Activated naive CD4-positive, alpha-beta T cell treated with anti-CD3 and anti-CD28 coated beads for 36 hours (primary cell): ENCODE measurements at regions of chr12 and their contacts with region 1.

Region 1: GRCh38 chr12:68180792-68181744 is 21.5 kb upstream of the IFNG start:
- DNase-seq: peak; percentile 70
- H3K4me3 Mint-ChIP-seq: no peak overlapping the region
- H3K27ac Mint-ChIP-seq: peak overlapping the region; percentile 93
- H3K4me1 Mint-ChIP-seq: peaks cover 56% of the 10 kb centered on the region
- H3K27me3 Mint-ChIP-seq: no peaks in the 10 kb centered on the region

Region 2: GRCh38 chr12:67991158-67991557 is 189.9 kb before region 1 on chr12:
- CTCF ChIA-PET with region 1: no interaction called
- intact Hi-C with region 1: loop called (anchors 2 kb)
- DNase-seq: peak; percentile 74
- H3K4me3 Mint-ChIP-seq: peak overlapping the region; percentile 55
- H3K27ac Mint-ChIP-seq: peak overlapping the region; percentile 80
- H3K4me1 Mint-ChIP-seq: peaks cover 49% of the 10 kb centered on the region
- H3K27me3 Mint-ChIP-seq: peaks cover 2% of the 10 kb centered on the region

Region 3: DNA sequence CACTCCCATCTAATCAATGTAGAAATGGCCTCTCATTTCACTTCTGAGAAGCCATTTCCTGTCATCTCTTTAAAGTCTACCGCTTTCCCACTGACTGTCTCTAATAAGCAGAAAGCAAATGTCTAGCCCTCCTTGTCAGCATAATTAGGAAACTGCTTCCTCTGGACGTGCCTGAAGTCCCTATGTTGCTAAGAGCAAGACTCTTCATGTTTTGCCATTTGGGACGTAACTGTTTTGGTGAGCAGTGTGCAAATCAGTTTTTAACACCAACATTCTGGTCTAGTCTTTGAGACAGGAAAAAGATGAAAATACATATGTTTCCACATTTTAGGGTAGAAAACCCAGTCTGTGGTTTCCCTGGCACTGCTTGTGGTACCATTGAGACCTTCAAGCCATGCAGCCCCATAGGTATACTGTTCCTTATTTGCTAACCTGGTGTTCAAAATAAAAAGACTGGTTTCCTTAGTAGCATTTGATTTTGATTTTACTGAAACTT is 43.7 kb before region 1 on chr12:
- CTCF ChIA-PET with region 1: no interaction called
- intact Hi-C with region 1: no loop called
- DNase-seq: peak; percentile 38
- H3K4me3 Mint-ChIP-seq: no peak overlapping the region
- H3K27ac Mint-ChIP-seq: peak overlapping the region; percentile 91
- H3K4me1 Mint-ChIP-seq: peaks cover 52% of the 10 kb centered on the region
- H3K27me3 Mint-ChIP-seq: no peaks in the 10 kb centered on the region

Region 4: GRCh38 chr12:68163560-68164081 is 17.4 kb before region 1 on chr12:
- CTCF ChIA-PET with region 1: interaction called, 9 read pairs
- intact Hi-C with region 1: loop called (anchors 2 kb)
- DNase-seq: peak; percentile 27
- H3K4me3 Mint-ChIP-seq: no peak overlapping the region
- H3K27ac Mint-ChIP-seq: peak overlapping the region; percentile 64
- H3K4me1 Mint-ChIP-seq: peaks cover 19% of the 10 kb centered on the region
- H3K27me3 Mint-ChIP-seq: no peaks in the 10 kb centered on the region

Region 5: GRCh38 chr12:68200854-68201253 is 19.8 kb after region 1 on chr12:
- CTCF ChIA-PET with region 1: no interaction called
- intact Hi-C with region 1: no loop called
- DNase-seq: no peak
- H3K4me3 Mint-ChIP-seq: no peak overlapping the region
- H3K27ac Mint-ChIP-seq: peak overlapping the region; percentile 48
- H3K4me1 Mint-ChIP-seq: peaks cover 33% of the 10 kb centered on the region
- H3K27me3 Mint-ChIP-seq: no peaks in the 10 kb centered on the region